WTC11 (cell line): ENCODE measurements at regions of chr12 and their contacts with region 1.

Region 1: GRCh38 chr12:52278541-52279421 is 4.3 kb downstream of the KRT86 start:
- DNase-seq: peak; percentile 87
- ATAC-seq: peak; percentile 99
- H3K4me3 Mint-ChIP-seq: peak overlapping the region; percentile 74
- H3K27ac Mint-ChIP-seq: no peak overlapping the region
- H3K4me1 Mint-ChIP-seq: peaks cover 5% of the 10 kb centered on the region
- H3K27me3 Mint-ChIP-seq: peaks cover 20% of the 10 kb centered on the region
- CTCF ChIP-seq: peak; percentile 97

Region 2: GRCh38 chr12:52171950-52172512 is 106.8 kb before region 1 on chr12:
- CTCF ChIA-PET with region 1: interaction called, 15 read pairs
- POLR2A ChIA-PET with region 1: no interaction called
- DNase-seq: peak; percentile 79
- ATAC-seq: peak; percentile 71
- H3K4me3 Mint-ChIP-seq: no peak overlapping the region
- H3K27ac Mint-ChIP-seq: no peak overlapping the region
- H3K4me1 Mint-ChIP-seq: peaks cover 9% of the 10 kb centered on the region
- H3K27me3 Mint-ChIP-seq: no peaks in the 10 kb centered on the region
- CTCF ChIP-seq: 0 out of 2 replicates have a peak, but pooled peaks have one; percentile 25

Region 3: DNA sequence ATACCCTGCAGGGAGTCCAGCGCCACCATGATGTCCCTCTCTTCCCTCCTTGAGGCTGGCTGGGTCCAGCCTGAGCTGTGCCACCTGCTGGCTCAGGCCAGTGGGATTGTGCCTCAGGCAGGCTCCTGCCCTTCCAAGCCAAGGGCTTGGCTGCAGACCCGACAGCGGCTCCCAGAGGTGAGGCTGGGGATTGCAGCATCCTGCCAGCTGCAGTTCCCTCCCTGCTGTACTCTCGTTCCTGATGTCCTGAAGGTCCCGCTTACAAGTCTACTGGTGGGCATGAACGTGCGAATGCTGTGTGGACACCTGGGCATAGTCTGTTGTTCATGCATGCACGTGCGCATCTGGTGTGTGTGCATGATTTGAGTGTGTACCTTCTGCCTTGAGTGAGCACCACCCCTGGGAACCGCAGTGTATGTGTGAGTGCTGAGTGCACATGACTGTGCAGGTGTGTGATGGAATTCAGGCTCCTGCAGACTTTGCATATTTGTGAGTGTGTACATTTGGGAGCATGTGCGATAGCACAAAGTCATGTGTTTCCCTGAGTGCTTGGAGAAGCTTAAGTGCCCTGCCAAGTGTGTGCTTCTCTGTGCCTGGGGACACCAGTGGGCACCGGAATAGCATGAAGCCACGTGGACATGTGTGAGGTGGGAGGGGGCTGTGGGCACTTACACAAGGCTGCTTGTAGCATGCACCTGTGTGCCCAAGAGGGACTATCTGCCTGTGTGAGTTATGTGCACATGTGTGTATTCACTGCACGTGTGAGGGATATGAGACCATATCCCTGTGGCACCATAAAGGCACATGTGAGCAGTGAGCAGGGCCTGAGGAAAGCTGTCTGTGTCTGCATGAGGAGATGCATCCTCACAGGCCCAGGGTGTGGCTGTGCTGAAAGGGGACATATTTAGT is 65.0 kb before region 1 on chr12:
- CTCF ChIA-PET with region 1: interaction called, 23 read pairs
- POLR2A ChIA-PET with region 1: no interaction called
- DNase-seq: peak; percentile 96
- ATAC-seq: peak; percentile 86
- H3K4me3 Mint-ChIP-seq: no peak overlapping the region
- H3K27ac Mint-ChIP-seq: no peak overlapping the region
- H3K4me1 Mint-ChIP-seq: peaks cover 12% of the 10 kb centered on the region
- H3K27me3 Mint-ChIP-seq: no peaks in the 10 kb centered on the region
- CTCF ChIP-seq: peak; percentile 81

Region 4: GRCh38 chr12:52235822-52236692 is 42.7 kb before region 1 on chr12:
- CTCF ChIA-PET with region 1: interaction called, 48 read pairs
- POLR2A ChIA-PET with region 1: no interaction called
- DNase-seq: no peak
- ATAC-seq: no peak
- H3K4me3 Mint-ChIP-seq: no peak overlapping the region
- H3K27ac Mint-ChIP-seq: no peak overlapping the region
- H3K4me1 Mint-ChIP-seq: peaks cover 58% of the 10 kb centered on the region
- H3K27me3 Mint-ChIP-seq: peaks cover 44% of the 10 kb centered on the region
- CTCF ChIP-seq: no peak

Region 5: DNA sequence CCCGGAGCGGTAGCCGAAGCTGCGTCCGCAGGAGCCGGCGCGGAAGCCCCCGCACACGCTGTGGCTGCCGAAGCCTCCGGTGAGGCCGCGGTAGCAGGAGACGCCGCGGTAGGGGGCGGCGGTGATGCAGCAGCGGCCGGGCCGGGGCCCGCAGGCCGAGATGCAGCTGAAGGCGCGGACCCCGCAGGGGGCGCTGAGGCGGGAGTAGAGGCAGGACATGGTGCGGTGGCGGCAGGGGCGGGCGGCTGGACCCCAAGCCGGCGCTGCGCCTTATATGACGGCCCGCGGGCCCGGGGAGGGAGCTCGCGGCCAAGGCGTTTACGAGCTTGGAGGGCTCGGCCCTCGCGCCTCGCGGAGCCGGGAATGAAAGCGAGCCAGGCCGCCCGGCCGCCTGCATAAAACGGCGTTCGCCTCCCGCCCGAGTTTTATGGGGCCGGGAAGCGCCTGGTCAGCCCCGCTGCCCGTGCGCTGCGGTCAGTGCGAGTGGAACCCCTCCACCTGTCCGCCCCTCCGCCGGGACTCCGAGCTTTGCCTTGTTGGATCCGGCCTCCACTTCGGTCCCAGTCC is 20.4 kb before region 1 on chr12:
- CTCF ChIA-PET with region 1: interaction called, 122 read pairs
- POLR2A ChIA-PET with region 1: no interaction called
- DNase-seq: peak; percentile 64
- ATAC-seq: peak; percentile 78
- H3K4me3 Mint-ChIP-seq: no peak overlapping the region
- H3K27ac Mint-ChIP-seq: no peak overlapping the region
- H3K4me1 Mint-ChIP-seq: peaks cover 9% of the 10 kb centered on the region
- H3K27me3 Mint-ChIP-seq: peaks cover 60% of the 10 kb centered on the region
- CTCF ChIP-seq: no peak

Region 6: DNA sequence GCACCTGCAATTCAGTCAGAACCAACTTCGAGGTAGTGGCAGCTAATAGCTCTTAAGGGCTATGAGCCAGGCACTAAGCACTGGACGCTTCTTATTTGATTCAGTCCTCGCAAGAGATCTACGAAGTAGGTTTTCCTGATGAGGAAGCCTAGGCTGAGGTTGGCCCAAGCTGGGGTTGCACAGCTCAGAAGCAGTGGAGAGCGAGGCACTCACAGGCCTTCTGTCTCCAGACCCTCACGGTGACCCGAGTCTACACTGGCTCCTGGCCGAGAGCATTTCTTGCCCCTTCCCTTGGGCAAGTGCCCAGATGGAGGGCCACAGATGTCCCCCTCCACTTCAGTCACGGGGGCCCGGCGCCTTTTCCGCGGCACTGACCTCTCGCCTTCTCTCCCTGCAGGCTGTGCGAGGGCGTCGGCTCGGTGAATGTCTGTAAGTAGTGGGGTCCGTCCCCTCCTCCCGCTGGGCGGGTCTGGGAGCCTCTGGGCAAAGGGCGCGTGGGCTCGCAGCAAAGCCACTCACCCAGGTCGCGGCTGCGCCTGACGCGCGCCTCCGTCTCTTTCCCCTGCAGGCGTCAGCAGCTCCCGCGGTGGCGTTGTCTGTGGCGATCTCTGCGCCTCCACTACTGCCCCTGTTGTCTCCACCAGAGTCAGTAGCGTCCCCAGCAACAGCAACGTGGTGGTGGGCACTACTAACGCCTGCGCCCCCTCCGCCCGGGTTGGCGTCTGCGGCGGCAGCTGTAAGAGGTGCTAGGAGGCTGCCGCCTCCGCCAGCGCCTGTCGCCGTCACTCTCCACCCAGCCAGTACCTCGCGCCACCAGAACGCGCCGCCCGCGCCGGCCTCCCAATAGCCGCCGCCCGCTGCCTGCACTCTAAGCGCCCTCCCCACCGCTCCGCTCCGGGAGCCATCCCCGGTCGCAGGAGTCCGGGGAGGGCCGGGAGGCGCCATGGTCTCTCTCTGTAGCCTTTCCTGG is 29.3 kb after region 1 on chr12:
- CTCF ChIA-PET with region 1: interaction called, 76 read pairs
- POLR2A ChIA-PET with region 1: no interaction called
- DNase-seq: peak; percentile 77
- ATAC-seq: peak; percentile 86
- H3K4me3 Mint-ChIP-seq: peak overlapping the region; percentile 76
- H3K27ac Mint-ChIP-seq: no peak overlapping the region
- H3K4me1 Mint-ChIP-seq: peaks cover 17% of the 10 kb centered on the region
- H3K27me3 Mint-ChIP-seq: peaks cover 57% of the 10 kb centered on the region
- CTCF ChIP-seq: no peak